ENCODE measurements at regions of chr1 and their contacts with region 1.

Region 1: GRCh38 chr1:155250633-155251449 is 4.4 kb downstream of the ENTREP3 start:
- DNase-seq: peak; percentile 97

Region 2: GRCh38 chr1:155193275-155193990 is 57.4 kb before region 1 on chr1:
- intact Hi-C with region 1: no loop called
- DNase-seq: peak; percentile 93

Region 3: DNA sequence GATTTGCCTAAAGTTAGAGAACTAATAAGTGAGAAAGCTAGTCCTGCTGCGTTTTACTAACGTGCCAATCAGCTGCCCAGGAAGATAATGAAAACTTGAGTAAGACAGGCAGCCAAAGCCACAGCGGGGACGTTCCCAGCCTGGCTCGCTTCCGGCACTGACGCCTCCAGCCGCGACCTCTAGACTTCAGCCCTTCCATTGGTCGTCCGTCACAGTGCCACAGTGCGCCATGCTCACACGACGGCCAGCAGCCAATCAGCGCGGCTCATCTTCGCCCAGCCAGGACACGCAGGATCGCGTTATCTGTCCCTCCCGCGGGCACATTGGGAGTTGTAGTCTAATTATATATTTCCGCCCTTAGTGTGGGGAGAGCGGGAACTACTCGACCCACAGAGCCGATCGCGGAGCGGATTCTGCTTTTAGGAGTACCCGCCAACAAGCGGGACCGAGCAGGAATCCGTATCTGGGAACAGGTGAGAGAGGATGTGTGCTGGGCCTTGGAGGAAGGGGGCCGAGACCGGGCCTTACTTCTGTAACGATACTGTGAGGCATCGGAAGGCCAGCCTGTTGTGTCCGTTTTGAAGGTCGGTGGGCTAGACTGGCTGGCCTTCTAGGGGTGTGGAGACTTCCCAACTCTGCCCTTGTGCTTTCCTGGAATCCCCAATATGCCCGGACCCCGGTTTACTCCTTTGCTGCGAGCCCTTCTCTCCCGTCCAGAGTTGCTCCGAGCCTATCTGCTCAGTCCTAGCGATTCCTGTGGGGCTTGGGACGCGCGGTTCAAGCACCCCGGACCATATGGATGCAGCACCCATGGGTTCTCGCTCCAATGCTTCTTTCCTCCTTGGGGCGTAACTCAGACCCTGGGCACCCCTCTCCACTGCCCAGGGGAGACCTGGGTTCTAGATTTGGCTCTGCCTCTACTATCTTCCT is 57.9 kb after region 1 on chr1 and contains the start of gene FDPS:
- intact Hi-C with region 1: loop called (anchors 2 kb)
- DNase-seq: peak; percentile 100
- total RNA-seq, gene FDPS: 83.1 TPM

Region 4: DNA sequence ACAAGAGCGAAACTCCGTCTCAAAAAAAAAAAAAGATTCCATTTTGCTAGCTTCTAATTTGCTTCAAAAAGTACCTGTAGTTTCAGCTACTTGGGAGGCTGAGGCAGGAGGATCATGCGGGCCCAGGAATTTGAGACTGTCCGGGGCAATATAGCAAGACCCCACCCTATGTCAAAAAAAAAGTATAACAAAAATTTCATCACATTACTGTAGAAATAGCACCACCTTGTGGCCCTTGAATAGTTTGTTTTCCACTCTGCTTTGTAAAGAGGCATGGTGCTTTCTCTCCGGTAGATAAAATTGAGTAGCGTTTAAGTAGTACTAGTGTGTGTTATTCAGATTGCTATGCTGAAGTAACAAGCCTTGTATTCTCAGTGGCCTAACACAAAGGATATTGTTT is 340.9 kb after region 1 on chr1:
- intact Hi-C with region 1: loop called (anchors 2 kb)
- DNase-seq: no peak

Region 5: DNA sequence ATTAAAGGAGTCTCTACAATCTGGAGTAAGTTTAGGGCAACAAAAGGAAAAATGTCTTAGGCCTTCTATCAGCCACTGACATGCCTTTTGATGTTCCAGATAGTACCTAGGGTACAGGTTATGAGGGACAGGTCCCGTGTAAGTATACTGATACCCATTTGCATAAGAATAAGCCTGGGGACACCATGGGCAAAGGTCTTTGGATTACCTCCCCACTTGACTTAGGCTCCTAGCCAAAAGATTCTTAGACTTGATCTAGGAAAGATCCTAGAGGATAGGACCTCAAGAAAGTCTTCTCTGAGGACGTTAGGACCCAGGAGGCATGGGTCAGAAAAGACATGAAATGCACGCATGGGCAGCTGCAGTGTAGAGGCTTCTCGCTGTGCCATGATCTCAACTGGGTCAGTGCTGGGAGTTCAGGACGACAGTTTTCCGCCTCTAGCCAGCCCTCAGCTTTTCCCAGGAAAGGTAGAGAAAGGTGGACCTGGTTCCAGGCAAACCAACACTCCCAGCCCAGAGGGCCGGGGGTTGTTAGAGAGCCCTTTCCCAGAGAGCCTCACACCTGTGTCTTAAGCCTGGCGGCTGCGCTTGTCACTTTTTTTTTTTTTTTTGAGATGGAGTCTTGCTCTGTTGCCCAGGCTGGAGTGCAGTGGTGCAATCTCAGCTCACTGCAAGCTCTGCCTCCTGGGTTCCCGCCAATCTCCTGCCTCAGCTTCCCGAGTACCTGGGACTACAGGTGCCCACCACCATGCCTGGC is 385.7 kb after region 1 on chr1:
- intact Hi-C with region 1: no loop called
- DNase-seq: no peak

Measured in cardiac septum (tissue), 1 donor.